ENCODE measurements at regions of chr9 and their contacts with region 1.

Region 1: DNA sequence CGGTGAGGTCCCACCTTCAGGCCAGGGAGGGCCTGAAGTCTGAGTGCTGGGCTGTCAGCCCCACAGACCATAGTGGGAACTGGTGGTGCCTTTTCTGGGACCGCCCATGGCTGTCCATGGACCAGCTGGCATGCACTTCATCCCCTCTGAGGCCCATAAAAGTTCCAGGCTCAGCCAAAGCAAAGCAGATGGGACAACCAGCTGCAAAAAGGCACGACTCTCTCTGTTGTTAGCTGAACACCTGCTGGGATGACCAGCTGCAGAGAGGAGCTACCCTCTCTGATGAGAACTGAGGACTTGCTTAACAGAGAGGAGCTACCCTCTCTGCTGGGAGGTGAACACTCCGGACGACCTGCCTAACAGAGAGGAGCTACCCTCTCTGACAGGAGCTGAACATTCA is 844.3 kb upstream of the DMAC1 start:
- DNase-seq: no peak
- ATAC-seq: no peak
- H3K4me3 ChIP-seq: no peak overlapping the region
- H3K27ac ChIP-seq: no peak overlapping the region
- H3K4me1 ChIP-seq: no peaks in the 10 kb centered on the region
- H3K27me3 ChIP-seq: no peaks in the 10 kb centered on the region
- CTCF ChIP-seq: no peak

Region 2: GRCh38 chr9:8660383-8660782 is 16.5 kb after region 1 on chr9:
- intact Hi-C with region 1: loop called in 1 of 2 experiments (anchors 2 kb)
- DNase-seq: peak; percentile 43 to 76
- ATAC-seq: peak in 3 of 4 donors; percentile 22 to 64 (median 41)
- H3K4me3 ChIP-seq: no peak overlapping the region
- H3K27ac ChIP-seq: no peak overlapping the region
- H3K4me1 ChIP-seq: no peaks in the 10 kb centered on the region
- H3K27me3 ChIP-seq: no peaks in the 10 kb centered on the region
- CTCF ChIP-seq: no peak

Region 3: DNA sequence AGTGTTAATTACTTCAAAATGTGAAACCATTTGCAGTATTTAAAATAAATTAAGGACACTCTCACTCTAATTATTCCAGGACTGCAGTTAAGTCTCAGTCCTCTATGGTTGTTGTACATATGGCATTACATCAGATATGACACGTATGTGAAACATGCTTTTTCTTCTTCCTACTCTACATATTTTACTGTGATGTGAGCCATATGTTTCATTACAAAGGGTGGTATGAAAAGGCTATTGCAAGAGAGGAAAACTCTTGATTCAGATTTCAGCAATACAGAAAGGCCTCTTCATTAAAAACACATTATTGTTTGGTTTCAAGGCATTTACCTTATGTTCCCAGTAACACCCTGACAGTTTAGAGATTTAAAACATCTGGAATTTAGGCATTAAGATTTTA is 120.2 kb after region 1 on chr9:
- intact Hi-C with region 1: no loop called
- DNase-seq: no peak
- ATAC-seq: no peak
- H3K4me3 ChIP-seq: no peak overlapping the region
- H3K27ac ChIP-seq: no peak overlapping the region
- H3K4me1 ChIP-seq: no peaks in the 10 kb centered on the region
- H3K27me3 ChIP-seq: no peaks in the 10 kb centered on the region
- CTCF ChIP-seq: no peak